ENCODE measurements at regions of chr4 and their contacts with region 1.

Region 1: GRCh38 chr4:169612871-169613859 is 782 bp upstream of the NEK1 start:
- DNase-seq: peak; percentile 78
- H3K4me3 Mint-ChIP-seq: peak overlapping the region; percentile 85
- H3K27ac Mint-ChIP-seq: peak overlapping the region; percentile 94
- H3K4me1 Mint-ChIP-seq: peaks cover 48% of the 10 kb centered on the region
- H3K27me3 Mint-ChIP-seq: no peaks in the 10 kb centered on the region

Region 2: GRCh38 chr4:169492438-169493163 is 120.6 kb before region 1 on chr4:
- CTCF ChIA-PET with region 1: no interaction called
- POLR2A ChIA-PET with region 1: no interaction called
- DNase-seq: peak; percentile 48
- H3K4me3 Mint-ChIP-seq: no peak overlapping the region
- H3K27ac Mint-ChIP-seq: no peak overlapping the region
- H3K4me1 Mint-ChIP-seq: peaks cover 3% of the 10 kb centered on the region
- H3K27me3 Mint-ChIP-seq: no peaks in the 10 kb centered on the region

Region 3: DNA sequence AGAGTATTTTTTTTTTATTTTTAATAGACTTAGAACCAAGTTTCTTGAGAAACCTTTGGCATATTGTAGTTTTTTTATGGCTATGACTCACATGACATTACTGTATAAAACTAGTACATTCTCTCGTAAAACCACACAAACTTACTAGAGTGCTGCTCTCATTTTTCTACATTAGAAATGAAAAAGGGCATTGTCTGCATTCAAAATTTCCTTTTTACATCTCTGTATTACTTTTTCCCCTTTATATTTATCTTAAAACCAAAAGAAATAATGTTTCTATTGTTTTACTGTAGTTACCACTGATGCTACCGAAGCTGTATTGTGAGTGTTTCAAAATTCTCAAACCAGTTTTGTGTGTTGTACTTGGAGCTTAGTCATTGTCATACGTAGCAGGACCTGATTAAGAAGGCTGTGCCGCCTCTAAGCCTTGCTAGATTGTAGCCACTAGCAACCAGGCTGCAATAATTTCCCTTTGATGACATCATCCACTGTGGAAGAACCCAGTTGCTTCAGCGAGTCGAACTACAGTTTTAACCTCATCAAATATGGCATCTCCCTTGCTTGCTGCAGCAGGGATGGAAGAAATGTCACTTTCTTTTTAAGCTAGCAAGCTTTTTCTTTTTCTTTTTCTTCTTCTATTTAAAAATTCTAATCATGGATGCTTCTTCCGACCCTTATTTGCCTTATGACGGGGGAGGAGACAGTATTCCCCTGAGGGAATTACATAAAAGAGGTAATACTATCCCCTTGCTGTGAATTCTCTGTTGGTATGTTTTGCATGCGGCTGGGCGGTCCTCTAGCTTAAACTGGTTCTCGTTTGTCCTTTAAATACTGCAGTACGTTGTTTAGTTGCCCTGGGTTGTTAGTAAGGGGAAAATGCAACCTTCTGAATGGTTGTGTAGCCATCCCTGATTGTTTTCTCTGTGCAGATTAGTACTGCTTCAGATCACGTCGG is 46.8 kb after region 1 on chr4:
- CTCF ChIA-PET with region 1: interaction called, 6 read pairs
- POLR2A ChIA-PET with region 1: interaction called, 13 read pairs
- DNase-seq: peak; percentile 69
- H3K4me3 Mint-ChIP-seq: peak overlapping the region; percentile 56
- H3K27ac Mint-ChIP-seq: peak overlapping the region; percentile 73
- H3K4me1 Mint-ChIP-seq: peaks cover 17% of the 10 kb centered on the region
- H3K27me3 Mint-ChIP-seq: no peaks in the 10 kb centered on the region

Region 4: DNA sequence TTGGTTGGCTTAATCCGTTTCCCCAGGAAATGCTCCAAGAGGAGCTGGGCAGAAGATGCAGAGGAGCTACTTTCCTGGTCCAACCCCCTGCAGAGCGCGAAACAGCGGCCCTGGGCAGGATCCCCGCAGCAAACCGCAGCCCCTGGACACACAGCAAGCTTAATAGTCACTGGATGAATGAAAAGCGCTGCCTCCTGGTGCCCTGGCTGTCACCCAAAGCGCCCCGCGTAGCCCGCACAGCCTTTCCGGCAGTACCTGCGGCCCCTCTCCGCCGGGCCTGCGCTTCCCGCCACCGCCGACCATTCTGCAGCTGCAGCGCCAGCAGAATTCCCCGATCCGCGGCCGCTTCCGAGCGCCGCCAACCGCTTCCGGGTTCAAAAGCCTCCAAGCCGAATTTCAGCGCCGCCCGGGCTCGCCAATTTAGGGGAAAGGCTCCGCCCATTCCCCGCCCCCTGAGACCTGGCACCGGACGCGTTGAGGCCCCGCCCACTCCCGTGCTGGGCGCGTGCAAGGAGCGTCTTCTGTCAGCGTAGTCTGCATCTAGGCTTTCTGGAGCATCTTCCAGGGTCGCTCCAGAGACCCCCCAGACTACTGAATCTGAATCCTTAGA is 144.5 kb after region 1 on chr4 and contains the start of gene HPF1:
- CTCF ChIA-PET with region 1: interaction called, 10 read pairs
- POLR2A ChIA-PET with region 1: interaction called, 8 read pairs
- DNase-seq: peak; percentile 95
- H3K4me3 Mint-ChIP-seq: peak within 1 kb of the TSS; percentile 84
- H3K27ac Mint-ChIP-seq: peak within 1 kb of the TSS; percentile 27
- H3K4me1 Mint-ChIP-seq: peaks cover 28% of the 10 kb centered on the region
- H3K27me3 Mint-ChIP-seq: peaks cover 9% of the 10 kb centered on the region
- total RNA-seq, gene HPF1: 20.5 to 23.4 TPM

Region 5: DNA sequence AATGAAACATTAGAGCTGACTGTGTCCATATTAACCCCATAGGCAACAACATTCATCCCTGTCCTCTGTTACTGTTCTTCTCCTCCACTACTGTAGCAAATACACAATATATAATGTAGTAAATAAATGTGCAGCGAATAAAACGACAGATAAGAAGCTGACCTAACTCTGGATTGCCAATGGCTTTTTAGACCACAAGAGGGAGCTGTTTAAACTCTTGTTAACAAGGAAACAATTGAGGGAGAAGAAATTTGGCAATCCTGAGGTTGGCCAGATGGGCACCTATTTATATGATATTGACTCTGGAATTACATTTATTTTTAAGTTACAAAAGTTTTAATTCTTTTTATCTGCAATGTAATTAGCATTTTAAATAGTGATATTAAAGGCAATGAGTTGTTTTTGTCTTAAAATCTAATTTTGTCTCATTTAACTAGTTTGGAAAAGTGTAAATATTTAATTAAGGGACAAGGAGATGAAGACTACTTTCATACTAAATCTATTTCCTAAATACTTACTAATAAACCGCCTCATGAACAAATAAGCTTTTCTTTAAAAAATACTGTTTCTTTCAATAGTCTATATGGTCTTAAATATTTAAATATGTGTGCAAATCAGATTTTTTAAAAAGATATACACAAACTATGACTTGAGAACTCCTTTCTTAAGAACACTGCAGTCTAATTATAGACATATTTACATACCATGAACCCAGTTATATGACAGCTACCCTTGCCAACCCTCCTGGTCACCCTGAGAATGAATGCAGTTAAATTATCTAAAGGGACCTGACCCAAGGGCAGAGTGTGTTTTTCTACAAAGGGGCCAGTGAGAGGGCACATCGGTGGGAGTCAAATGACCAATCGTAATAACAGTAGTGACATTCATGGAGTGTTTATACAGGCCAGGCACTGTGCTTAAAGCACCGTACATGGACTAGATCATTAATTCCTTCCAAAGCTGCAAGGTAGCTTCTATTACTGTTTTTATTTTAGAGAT is 197.5 kb after region 1 on chr4:
- CTCF ChIA-PET with region 1: interaction called, 20 read pairs
- POLR2A ChIA-PET with region 1: no interaction called
- DNase-seq: no peak
- H3K4me3 Mint-ChIP-seq: no peak overlapping the region
- H3K27ac Mint-ChIP-seq: no peak overlapping the region
- H3K4me1 Mint-ChIP-seq: no peaks in the 10 kb centered on the region
- H3K27me3 Mint-ChIP-seq: peaks cover 2% of the 10 kb centered on the region

Region 6: DNA sequence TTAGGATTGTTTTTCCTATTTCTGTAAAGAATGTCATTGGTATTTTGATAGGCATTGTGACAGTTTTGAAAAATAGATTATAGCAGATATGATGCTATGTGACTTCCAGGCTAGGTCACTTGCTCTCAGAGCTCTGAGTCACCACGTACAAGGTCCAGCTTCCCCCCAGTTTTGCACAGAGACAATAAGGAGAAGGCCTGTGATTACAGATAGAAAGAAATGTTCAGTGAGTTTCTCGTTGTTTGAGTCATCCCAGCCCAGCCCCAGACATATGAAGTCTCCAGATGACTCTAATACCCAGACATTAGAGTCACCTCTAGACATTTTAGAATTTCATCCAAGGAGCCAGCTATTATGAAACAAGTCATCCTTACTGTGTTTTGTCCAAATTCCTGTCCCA is 355.8 kb after region 1 on chr4:
- CTCF ChIA-PET with region 1: no interaction called
- POLR2A ChIA-PET with region 1: no interaction called
- DNase-seq: no peak
- H3K4me3 Mint-ChIP-seq: no peak overlapping the region
- H3K27ac Mint-ChIP-seq: no peak overlapping the region
- H3K4me1 Mint-ChIP-seq: no peaks in the 10 kb centered on the region
- H3K27me3 Mint-ChIP-seq: peaks cover 2% of the 10 kb centered on the region

Region 7: GRCh38 chr4:170027181-170027829 is 414.1 kb after region 1 on chr4:
- CTCF ChIA-PET with region 1: interaction called, 4 read pairs
- POLR2A ChIA-PET with region 1: interaction called, 14 read pairs
- DNase-seq: peak; percentile 88
- H3K4me3 Mint-ChIP-seq: peak overlapping the region; percentile 78
- H3K27ac Mint-ChIP-seq: peak overlapping the region; percentile 23
- H3K4me1 Mint-ChIP-seq: peaks cover 16% of the 10 kb centered on the region
- H3K27me3 Mint-ChIP-seq: peaks cover 51% of the 10 kb centered on the region